ENCODE measurements at regions of chr3 and their contacts with region 1.

Region 1: DNA sequence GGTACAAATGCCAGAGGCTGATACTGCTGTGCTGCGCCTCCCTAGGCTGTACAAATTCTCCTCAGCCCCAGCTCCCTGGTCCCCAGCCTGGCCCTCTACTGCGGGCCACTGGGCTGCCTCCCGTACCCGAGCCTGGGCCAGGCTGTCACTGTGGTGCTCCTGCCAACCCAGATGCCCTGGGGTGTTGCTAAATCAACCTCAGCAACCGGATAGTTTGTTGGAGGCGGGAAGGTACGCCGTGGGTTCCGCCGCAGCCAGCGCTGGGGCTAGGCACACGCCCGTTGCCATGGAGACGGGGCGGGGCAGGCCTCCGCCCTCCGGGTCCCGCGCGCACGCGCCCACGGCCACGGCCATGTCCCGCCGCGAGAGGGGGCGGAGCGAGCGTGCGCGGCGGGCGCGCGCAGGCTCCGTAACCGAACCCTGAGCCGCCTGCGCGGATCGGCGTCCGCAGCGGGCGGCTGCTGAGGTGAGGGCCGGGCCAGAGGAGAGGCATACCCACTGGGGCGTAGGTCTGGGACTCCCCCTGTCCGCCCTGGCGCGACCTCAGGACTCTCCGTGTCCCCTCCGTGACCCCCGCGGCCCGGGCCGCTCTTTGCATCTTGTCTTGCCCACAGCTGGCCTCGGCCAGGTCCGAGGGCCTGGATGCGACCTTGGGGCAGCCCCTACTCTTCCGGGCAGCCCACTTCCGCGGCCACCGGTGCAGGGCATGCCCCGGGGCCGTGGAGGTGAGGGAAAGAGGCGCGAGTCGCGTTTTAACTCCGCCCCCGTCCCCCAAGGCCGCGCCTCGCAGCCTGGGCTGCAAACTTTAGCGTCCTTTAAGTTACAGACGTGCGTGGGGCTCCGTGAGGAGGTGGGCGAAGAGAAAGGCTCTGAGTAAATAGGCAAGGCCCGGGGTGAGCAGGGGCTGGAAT is at the start of gene TEX264:
- DNase-seq: peak; percentile 53
- ATAC-seq: peak; percentile 87
- H3K4me3 ChIP-seq: peak within 1 kb of the TSS; percentile 68
- H3K27ac ChIP-seq: peak within 1 kb of the TSS; percentile 93
- H3K4me1 ChIP-seq: peaks cover 22% of the 10 kb centered on the region
- H3K27me3 ChIP-seq: no peaks in the 10 kb centered on the region
- CTCF ChIP-seq: no peak
- EP300 ChIP-seq: no peak
- POLR2A ChIP-seq: peak; percentile 88
- RAD21 ChIP-seq: no peak
- polyA plus RNA-seq, gene TEX264: 3.6 to 15.3 TPM

Region 2: GRCh38 chr3:51384726-51385473 is 286.2 kb before region 1 on chr3 and contains the start of gene MANF:
- CTCF ChIA-PET with region 1: interaction called, 25 read pairs
- POLR2A ChIA-PET with region 1: interaction called, 5 read pairs
- RAD21 ChIA-PET with region 1: interaction called, 4 read pairs
- SMC1A ChIA-PET with region 1: interaction called, 5 read pairs
- in situ Hi-C with region 1: no loop called
- intact Hi-C with region 1: loop called (anchors 5 kb)
- DNase-seq: peak; percentile 93
- ATAC-seq: peak; percentile 97
- H3K4me3 ChIP-seq: peak within 1 kb of the TSS; percentile 96
- H3K27ac ChIP-seq: peak within 1 kb of the TSS; percentile 86
- H3K4me1 ChIP-seq: peaks cover 16% of the 10 kb centered on the region
- H3K27me3 ChIP-seq: no peaks in the 10 kb centered on the region
- CTCF ChIP-seq: peak in 1 of 3 experiments; percentile 6; a peak in 1 of 6 replicates
- EP300 ChIP-seq: peak in 1 of 2 experiments; percentile 13; a peak in 1 of 4 replicates
- POLR2A ChIP-seq: peak; percentile 98
- RAD21 ChIP-seq: no peak
- polyA plus RNA-seq, gene MANF: 22.0 to 68.0 TPM

Region 3: DNA sequence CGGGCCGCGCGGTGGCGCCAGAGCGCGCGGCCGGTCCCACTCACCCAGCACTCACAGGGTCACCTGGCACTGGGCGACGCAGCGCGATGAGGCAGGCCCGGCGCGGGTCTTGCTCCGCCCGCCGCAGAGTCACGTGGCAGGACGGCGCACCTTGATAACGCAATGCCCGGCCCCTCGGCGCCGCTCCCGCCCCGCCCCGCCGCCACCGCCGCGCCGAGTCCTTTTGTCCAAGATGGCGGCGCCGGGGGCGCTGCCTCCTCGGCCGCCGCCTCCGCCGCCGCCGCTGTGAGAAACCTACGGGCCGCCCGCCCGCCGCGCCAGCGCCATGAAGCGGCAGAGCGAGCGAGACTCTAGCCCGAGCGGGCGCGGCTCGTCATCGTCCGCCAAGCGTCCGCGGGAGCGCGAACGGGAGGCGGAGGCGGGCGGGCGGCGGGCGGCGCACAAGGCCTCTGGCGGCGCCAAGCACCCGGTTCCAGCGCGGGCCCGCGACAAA is 280.0 kb before region 1 on chr3 and contains the start of gene RBM15B:
- CTCF ChIA-PET with region 1: interaction called, 25 read pairs
- POLR2A ChIA-PET with region 1: no interaction called
- RAD21 ChIA-PET with region 1: interaction called, 4 read pairs
- SMC1A ChIA-PET with region 1: interaction called, 5 read pairs
- in situ Hi-C with region 1: no loop called
- intact Hi-C with region 1: loop called (anchors 5 kb)
- DNase-seq: peak; percentile 80
- ATAC-seq: peak; percentile 96
- H3K4me3 ChIP-seq: peak within 1 kb of the TSS; percentile 83
- H3K27ac ChIP-seq: peak within 1 kb of the TSS; percentile 73
- H3K4me1 ChIP-seq: peaks cover 25% of the 10 kb centered on the region
- H3K27me3 ChIP-seq: no peaks in the 10 kb centered on the region
- CTCF ChIP-seq: peak; percentile 84 to 93 (median 93); a peak in 4 of 6 replicates
- EP300 ChIP-seq: 0 out of 4 replicates have a peak, but pooled peaks of 1 of the 2 experiments have one; percentile 12
- POLR2A ChIP-seq: peak; percentile 81
- RAD21 ChIP-seq: peak; percentile 44; the same call in 1 of the 2 replicates
- polyA plus RNA-seq, gene RBM15B: 2.4 to 3.0 TPM

Region 4: GRCh38 chr3:51637941-51638471 is 33.1 kb before region 1 on chr3:
- CTCF ChIA-PET with region 1: interaction called, 36 read pairs
- POLR2A ChIA-PET with region 1: no interaction called
- RAD21 ChIA-PET with region 1: interaction called, 3 read pairs
- SMC1A ChIA-PET with region 1: interaction called, 4 read pairs
- in situ Hi-C with region 1: no loop called
- intact Hi-C with region 1: no loop called
- DNase-seq: no peak
- ATAC-seq: peak; percentile 99
- H3K4me3 ChIP-seq: no peak overlapping the region
- H3K27ac ChIP-seq: no peak overlapping the region
- H3K4me1 ChIP-seq: no peaks in the 10 kb centered on the region
- H3K27me3 ChIP-seq: no peaks in the 10 kb centered on the region
- CTCF ChIP-seq: peak; percentile 86 to 97 (median 87); a peak in 5 of 6 replicates
- EP300 ChIP-seq: no peak
- POLR2A ChIP-seq: no peak
- RAD21 ChIP-seq: peak; percentile 66

Region 5: DNA sequence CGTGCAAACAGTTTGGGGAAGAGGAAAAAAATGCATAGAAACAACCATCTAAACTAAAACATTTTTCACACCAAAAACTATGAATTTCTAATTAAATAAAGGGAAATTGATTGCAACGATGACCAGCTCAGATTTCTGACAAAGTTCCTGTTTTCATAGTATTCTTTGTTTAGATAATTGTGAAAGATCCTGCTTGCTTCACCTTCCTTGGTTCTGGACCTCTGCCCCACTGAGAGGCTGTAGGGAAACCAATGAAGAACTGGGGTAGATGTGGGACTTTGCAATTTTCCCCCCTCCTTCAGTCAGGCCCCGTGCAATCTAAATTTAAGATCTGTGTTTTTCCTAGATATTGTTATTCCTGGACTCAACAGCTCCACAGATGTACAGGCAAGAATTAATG is 13.8 kb before region 1 on chr3:
- CTCF ChIA-PET with region 1: interaction called, 11 read pairs
- POLR2A ChIA-PET with region 1: no interaction called
- RAD21 ChIA-PET with region 1: no interaction called
- SMC1A ChIA-PET with region 1: no interaction called
- in situ Hi-C with region 1: no loop called
- intact Hi-C with region 1: no loop called
- DNase-seq: no peak
- ATAC-seq: no peak
- H3K4me3 ChIP-seq: no peak overlapping the region
- H3K27ac ChIP-seq: no peak overlapping the region
- H3K4me1 ChIP-seq: no peaks in the 10 kb centered on the region
- H3K27me3 ChIP-seq: no peaks in the 10 kb centered on the region
- CTCF ChIP-seq: no peak
- EP300 ChIP-seq: no peak
- POLR2A ChIP-seq: no peak
- RAD21 ChIP-seq: no peak

Region 6: GRCh38 chr3:51718547-51719409 is 47.7 kb after region 1 on chr3:
- CTCF ChIA-PET with region 1: interaction called, 16 read pairs
- POLR2A ChIA-PET with region 1: no interaction called
- RAD21 ChIA-PET with region 1: interaction called, 6 read pairs
- SMC1A ChIA-PET with region 1: no interaction called
- in situ Hi-C with region 1: no loop called
- intact Hi-C with region 1: no loop called
- DNase-seq: peak; percentile 23
- ATAC-seq: peak; percentile 98
- H3K4me3 ChIP-seq: no peak overlapping the region
- H3K27ac ChIP-seq: no peak overlapping the region
- H3K4me1 ChIP-seq: no peaks in the 10 kb centered on the region
- H3K27me3 ChIP-seq: no peaks in the 10 kb centered on the region
- CTCF ChIP-seq: peak; percentile 71 to 96 (median 92)
- EP300 ChIP-seq: no peak
- POLR2A ChIP-seq: no peak
- RAD21 ChIP-seq: peak; percentile 32; the same call in 1 of the 2 replicates

Region 7: GRCh38 chr3:51734572-51734907 is 63.5 kb after region 1 on chr3:
- CTCF ChIA-PET with region 1: no interaction called
- POLR2A ChIA-PET with region 1: no interaction called
- RAD21 ChIA-PET with region 1: no interaction called
- SMC1A ChIA-PET with region 1: no interaction called
- in situ Hi-C with region 1: no loop called
- intact Hi-C with region 1: no loop called
- DNase-seq: no peak
- ATAC-seq: no peak
- H3K4me3 ChIP-seq: no peak overlapping the region
- H3K27ac ChIP-seq: no peak overlapping the region
- H3K4me1 ChIP-seq: no peaks in the 10 kb centered on the region
- H3K27me3 ChIP-seq: no peaks in the 10 kb centered on the region
- CTCF ChIP-seq: no peak
- EP300 ChIP-seq: no peak
- POLR2A ChIP-seq: no peak
- RAD21 ChIP-seq: no peak

Region 8: GRCh38 chr3:52062499-52062898 is 391.4 kb after region 1 on chr3:
- CTCF ChIA-PET with region 1: no interaction called
- POLR2A ChIA-PET with region 1: no interaction called
- RAD21 ChIA-PET with region 1: no interaction called
- SMC1A ChIA-PET with region 1: no interaction called
- in situ Hi-C with region 1: no loop called
- intact Hi-C with region 1: no loop called
- DNase-seq: peak; percentile 42
- ATAC-seq: peak; percentile 66
- H3K4me3 ChIP-seq: no peak overlapping the region
- H3K27ac ChIP-seq: peak overlapping the region; percentile 35
- H3K4me1 ChIP-seq: peaks cover 28% of the 10 kb centered on the region
- H3K27me3 ChIP-seq: no peaks in the 10 kb centered on the region
- CTCF ChIP-seq: no peak
- EP300 ChIP-seq: no peak
- POLR2A ChIP-seq: no peak
- RAD21 ChIP-seq: no peak